Dendritic cell treated with granulocyte-macrophage colony-stimulating factor and Interleukin-4, amounts not matched to agents 40 ng/mL and 50 ng/mL, for 4 days (primary cell): ENCODE measurements at regions of chr17 and their contacts with region 1.

Region 1: GRCh38 chr17:76121932-76122430 is 18.4 kb upstream of the EXOC7 start:
- H3K4me3 Mint-ChIP-seq: peak overlapping the region; percentile 55
- H3K27ac Mint-ChIP-seq: peak overlapping the region; percentile 37
- H3K4me1 Mint-ChIP-seq: peaks cover 14% of the 10 kb centered on the region
- H3K27me3 Mint-ChIP-seq: peaks cover 44% of the 10 kb centered on the region

Region 2: GRCh38 chr17:76182016-76182764 is 60.2 kb after region 1 on chr17:
- intact Hi-C with region 1: loop called (anchors 2 kb)
- H3K4me3 Mint-ChIP-seq: no peak overlapping the region
- H3K27ac Mint-ChIP-seq: no peak overlapping the region
- H3K4me1 Mint-ChIP-seq: no peaks in the 10 kb centered on the region
- H3K27me3 Mint-ChIP-seq: no peaks in the 10 kb centered on the region